ENCODE measurements at regions of chr4 and their contacts with region 1.

Region 1: GRCh38 chr4:101347557-101348366 is 436 bp upstream of the PPP3CA start:
- DNase-seq: peak; percentile 78 to 95
- H3K4me3 ChIP-seq: peak overlapping the region; percentile 92
- H3K27ac ChIP-seq: peak overlapping the region; percentile 83
- H3K4me1 ChIP-seq: peaks cover 30% of the 10 kb centered on the region
- H3K27me3 ChIP-seq: no peaks in the 10 kb centered on the region
- CTCF ChIP-seq: no peak

Region 2: GRCh38 chr4:100421361-100421978 is 926.3 kb before region 1 on chr4:
- CTCF ChIA-PET with region 1: no interaction called
- POLR2A ChIA-PET with region 1: no interaction called
- intact Hi-C with region 1: loop called (anchors 2 kb)
- DNase-seq: no peak
- H3K4me3 ChIP-seq: no peak overlapping the region
- H3K27ac ChIP-seq: no peak overlapping the region
- H3K4me1 ChIP-seq: no peaks in the 10 kb centered on the region
- H3K27me3 ChIP-seq: no peaks in the 10 kb centered on the region
- CTCF ChIP-seq: peak; percentile 73

Region 3: GRCh38 chr4:100907465-100908454 is 440.0 kb before region 1 on chr4:
- CTCF ChIA-PET with region 1: no interaction called
- POLR2A ChIA-PET with region 1: no interaction called
- intact Hi-C with region 1: loop called (anchors 2 kb)
- DNase-seq: peak; percentile 3 to 46
- H3K4me3 ChIP-seq: no peak overlapping the region
- H3K27ac ChIP-seq: no peak overlapping the region
- H3K4me1 ChIP-seq: no peaks in the 10 kb centered on the region
- H3K27me3 ChIP-seq: no peaks in the 10 kb centered on the region
- CTCF ChIP-seq: peak; percentile 62

Region 4: GRCh38 chr4:101367201-101367600 is 19.4 kb after region 1 on chr4:
- CTCF ChIA-PET with region 1: no interaction called
- POLR2A ChIA-PET with region 1: no interaction called
- intact Hi-C with region 1: loop called (anchors 2 kb)
- DNase-seq: peak; percentile 28 to 86
- H3K4me3 ChIP-seq: no peak overlapping the region
- H3K27ac ChIP-seq: peak overlapping the region; percentile 95
- H3K4me1 ChIP-seq: peaks cover 20% of the 10 kb centered on the region
- H3K27me3 ChIP-seq: no peaks in the 10 kb centered on the region
- CTCF ChIP-seq: no peak

Region 5: DNA sequence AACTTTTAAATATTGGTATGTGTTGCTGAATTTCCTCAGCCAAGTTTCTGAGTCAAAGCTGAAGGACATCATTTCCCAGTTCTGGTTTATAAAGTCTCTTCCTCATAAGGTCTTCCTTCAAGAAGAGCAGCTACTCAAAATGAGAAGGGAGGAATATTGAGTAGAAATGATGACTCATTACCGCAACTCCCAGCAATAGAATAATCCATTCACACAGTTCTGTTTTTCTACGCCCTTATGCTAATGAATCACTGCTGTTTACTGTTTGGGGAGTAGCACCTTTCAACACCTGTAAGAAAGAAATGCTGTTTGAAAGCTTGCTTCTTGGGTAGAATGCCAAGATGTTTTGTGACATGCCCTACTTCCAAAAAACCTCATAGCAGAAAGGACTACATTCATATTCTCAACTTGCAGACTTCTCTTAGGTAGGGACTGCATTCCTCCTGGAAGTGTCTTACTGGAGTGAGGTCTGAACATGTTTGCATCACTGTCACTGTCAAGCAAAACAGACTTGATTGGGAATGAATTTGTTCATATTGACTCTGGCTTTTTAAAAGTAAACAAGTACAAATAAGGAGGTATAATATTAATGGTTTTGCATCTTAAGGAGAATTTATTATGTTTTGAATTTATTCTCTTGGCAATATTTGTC is 295.6 kb after region 1 on chr4:
- CTCF ChIA-PET with region 1: no interaction called
- POLR2A ChIA-PET with region 1: no interaction called
- intact Hi-C with region 1: loop called (anchors 5 kb)
- DNase-seq: peak; percentile 5 to 77
- H3K4me3 ChIP-seq: no peak overlapping the region
- H3K27ac ChIP-seq: no peak overlapping the region
- H3K4me1 ChIP-seq: peaks cover 8% of the 10 kb centered on the region
- H3K27me3 ChIP-seq: no peaks in the 10 kb centered on the region
- CTCF ChIP-seq: no peak

Region 6: GRCh38 chr4:102263011-102263787 is 915.4 kb after region 1 on chr4:
- CTCF ChIA-PET with region 1: no interaction called
- POLR2A ChIA-PET with region 1: no interaction called
- intact Hi-C with region 1: loop called (anchors 5 kb)
- DNase-seq: peak; percentile 5 to 70
- H3K4me3 ChIP-seq: no peak overlapping the region
- H3K27ac ChIP-seq: no peak overlapping the region
- H3K4me1 ChIP-seq: no peaks in the 10 kb centered on the region
- H3K27me3 ChIP-seq: no peaks in the 10 kb centered on the region
- CTCF ChIP-seq: peak; percentile 70

Measured in PC-9 (cell line).